OCI-LY7 (cell line): ENCODE measurements at regions of chr9 and their contacts with region 1.

Region 1: DNA sequence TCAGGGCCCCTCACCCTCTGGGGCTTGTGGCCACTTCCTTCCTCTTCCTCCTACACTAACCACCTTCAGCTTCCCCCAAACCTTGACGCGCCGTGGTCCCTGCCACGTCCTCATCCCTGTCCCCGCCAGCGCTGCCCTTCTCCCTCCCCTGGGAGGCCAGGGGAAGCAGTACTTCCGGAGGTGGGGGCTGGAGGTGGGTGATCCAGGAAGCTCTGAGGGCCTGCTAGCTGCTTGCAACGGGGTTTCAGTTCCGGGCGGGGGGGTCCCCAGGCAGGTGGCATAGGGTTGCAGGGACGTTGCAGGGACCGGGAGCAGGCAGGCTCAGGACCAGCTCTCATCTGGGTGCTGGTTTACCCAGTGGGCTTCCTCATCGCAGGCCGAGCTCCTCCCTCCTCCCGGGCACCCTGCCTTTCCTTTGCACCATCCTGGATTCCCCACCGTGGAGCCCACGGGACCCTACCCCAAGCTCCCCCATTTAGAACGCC is 70.0 kb downstream of the RXRA start:
- DNase-seq: peak; percentile 61
- H3K4me3 ChIP-seq: peak overlapping the region; percentile 33
- H3K27ac ChIP-seq: no peak overlapping the region
- H3K4me1 ChIP-seq: peaks cover 17% of the 10 kb centered on the region
- CTCF ChIP-seq: no peak

Region 2: GRCh38 chr9:134344068-134344799 is 52.1 kb before region 1 on chr9:
- CTCF ChIA-PET with region 1: no interaction called
- POLR2A ChIA-PET with region 1: no interaction called
- intact Hi-C with region 1: no loop called
- DNase-seq: no peak
- H3K4me3 ChIP-seq: no peak overlapping the region
- H3K27ac ChIP-seq: no peak overlapping the region
- H3K4me1 ChIP-seq: no peaks in the 10 kb centered on the region
- CTCF ChIP-seq: 0 out of 2 replicates have a peak, but pooled peaks have one; percentile 16

Region 3: DNA sequence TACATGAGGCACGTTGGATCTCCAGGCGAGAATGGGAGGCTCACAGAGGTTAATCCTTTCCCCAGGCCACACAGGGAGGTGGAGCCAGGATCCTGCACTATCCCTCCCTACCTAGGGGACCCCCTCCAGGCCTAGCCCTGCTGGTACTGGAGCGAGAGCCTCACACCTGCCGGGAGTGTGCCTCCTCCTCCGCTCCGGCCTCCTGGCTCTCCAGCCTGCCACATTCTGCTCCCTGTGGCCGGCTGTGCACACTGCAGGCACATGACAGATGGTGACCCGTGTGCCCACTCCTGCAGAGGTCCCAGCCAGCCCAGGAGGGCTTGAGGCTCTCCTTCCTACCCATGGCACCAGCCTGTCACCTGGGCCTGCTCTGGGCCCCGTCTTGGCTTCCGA is 23.4 kb after region 1 on chr9:
- CTCF ChIA-PET with region 1: no interaction called
- POLR2A ChIA-PET with region 1: no interaction called
- intact Hi-C with region 1: loop called (anchors 2 kb)
- DNase-seq: no peak
- H3K4me3 ChIP-seq: no peak overlapping the region
- H3K27ac ChIP-seq: no peak overlapping the region
- H3K4me1 ChIP-seq: no peaks in the 10 kb centered on the region
- CTCF ChIP-seq: peak; percentile 59

Region 4: GRCh38 chr9:134469041-134469875 is 73.0 kb after region 1 on chr9:
- CTCF ChIA-PET with region 1: no interaction called
- POLR2A ChIA-PET with region 1: no interaction called
- intact Hi-C with region 1: no loop called
- DNase-seq: no peak
- H3K4me3 ChIP-seq: no peak overlapping the region
- H3K27ac ChIP-seq: no peak overlapping the region
- H3K4me1 ChIP-seq: no peaks in the 10 kb centered on the region
- CTCF ChIP-seq: no peak